WTC11 (cell line): ENCODE measurements at regions of chr20 and their contacts with region 1.

Region 1: GRCh38 chr20:38658879-38659596 is 57.4 kb downstream of the ARHGAP40 start:
- DNase-seq: peak; percentile 76
- ATAC-seq: peak; percentile 99
- H3K4me3 Mint-ChIP-seq: no peak overlapping the region
- H3K27ac Mint-ChIP-seq: no peak overlapping the region
- H3K4me1 Mint-ChIP-seq: peaks cover 17% of the 10 kb centered on the region
- H3K27me3 Mint-ChIP-seq: peaks cover 54% of the 10 kb centered on the region
- CTCF ChIP-seq: peak; percentile 80

Region 2: DNA sequence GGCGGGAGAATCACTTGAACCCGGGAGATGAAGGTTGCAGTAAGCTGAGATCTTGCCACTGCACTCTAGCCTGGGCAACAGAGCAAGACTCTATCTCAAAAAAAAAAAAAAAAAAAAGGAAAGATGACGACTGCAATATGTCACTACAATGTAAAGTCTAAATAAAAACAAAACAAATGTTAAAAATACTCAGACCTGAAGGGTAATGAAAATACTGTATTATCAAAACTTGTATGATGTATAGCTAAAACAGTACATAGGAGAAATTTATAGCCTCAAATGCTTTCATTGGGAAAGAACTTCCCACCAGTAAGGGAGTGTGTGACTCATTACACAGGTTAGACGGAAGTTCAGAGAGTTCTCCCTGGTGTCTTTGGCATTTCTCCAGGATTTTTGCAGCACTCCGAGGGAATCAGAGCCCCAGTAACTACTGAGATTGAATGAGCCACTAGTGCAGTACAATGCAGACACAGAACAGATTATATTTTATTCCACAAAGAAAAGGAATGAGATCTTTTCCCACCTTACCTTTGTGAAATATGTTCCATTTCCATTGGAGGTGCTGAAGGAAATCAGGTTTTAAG is 198.9 kb before region 1 on chr20:
- CTCF ChIA-PET with region 1: no interaction called
- POLR2A ChIA-PET with region 1: no interaction called
- DNase-seq: no peak
- ATAC-seq: no peak; the same call in 1 of the 2 replicates
- H3K4me3 Mint-ChIP-seq: no peak overlapping the region
- H3K27ac Mint-ChIP-seq: no peak overlapping the region
- H3K4me1 Mint-ChIP-seq: no peaks in the 10 kb centered on the region
- H3K27me3 Mint-ChIP-seq: peaks cover 9% of the 10 kb centered on the region
- CTCF ChIP-seq: no peak

Region 3: DNA sequence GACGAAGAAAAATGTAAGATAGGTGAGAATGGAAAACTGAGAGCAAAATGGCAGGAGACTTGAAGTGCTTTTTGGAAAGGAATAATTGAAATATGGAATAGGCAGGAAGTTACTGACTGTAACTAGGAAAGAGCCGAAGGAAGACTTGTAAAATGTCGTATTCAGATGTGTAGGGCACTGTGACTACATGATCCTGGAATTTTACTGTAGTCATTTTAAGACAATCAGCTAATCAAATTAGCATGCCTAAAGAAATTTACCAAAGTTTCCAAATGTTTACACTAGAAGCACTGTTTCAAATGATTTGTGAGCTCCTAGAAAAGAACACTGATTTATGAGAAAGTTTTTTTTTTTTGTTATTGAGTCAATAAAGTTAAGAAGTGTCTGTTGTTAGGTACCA is 99.3 kb before region 1 on chr20:
- CTCF ChIA-PET with region 1: no interaction called
- POLR2A ChIA-PET with region 1: no interaction called
- DNase-seq: no peak
- ATAC-seq: no peak
- H3K4me3 Mint-ChIP-seq: no peak overlapping the region
- H3K27ac Mint-ChIP-seq: no peak overlapping the region
- H3K4me1 Mint-ChIP-seq: no peaks in the 10 kb centered on the region
- H3K27me3 Mint-ChIP-seq: no peaks in the 10 kb centered on the region
- CTCF ChIP-seq: no peak

Region 4: DNA sequence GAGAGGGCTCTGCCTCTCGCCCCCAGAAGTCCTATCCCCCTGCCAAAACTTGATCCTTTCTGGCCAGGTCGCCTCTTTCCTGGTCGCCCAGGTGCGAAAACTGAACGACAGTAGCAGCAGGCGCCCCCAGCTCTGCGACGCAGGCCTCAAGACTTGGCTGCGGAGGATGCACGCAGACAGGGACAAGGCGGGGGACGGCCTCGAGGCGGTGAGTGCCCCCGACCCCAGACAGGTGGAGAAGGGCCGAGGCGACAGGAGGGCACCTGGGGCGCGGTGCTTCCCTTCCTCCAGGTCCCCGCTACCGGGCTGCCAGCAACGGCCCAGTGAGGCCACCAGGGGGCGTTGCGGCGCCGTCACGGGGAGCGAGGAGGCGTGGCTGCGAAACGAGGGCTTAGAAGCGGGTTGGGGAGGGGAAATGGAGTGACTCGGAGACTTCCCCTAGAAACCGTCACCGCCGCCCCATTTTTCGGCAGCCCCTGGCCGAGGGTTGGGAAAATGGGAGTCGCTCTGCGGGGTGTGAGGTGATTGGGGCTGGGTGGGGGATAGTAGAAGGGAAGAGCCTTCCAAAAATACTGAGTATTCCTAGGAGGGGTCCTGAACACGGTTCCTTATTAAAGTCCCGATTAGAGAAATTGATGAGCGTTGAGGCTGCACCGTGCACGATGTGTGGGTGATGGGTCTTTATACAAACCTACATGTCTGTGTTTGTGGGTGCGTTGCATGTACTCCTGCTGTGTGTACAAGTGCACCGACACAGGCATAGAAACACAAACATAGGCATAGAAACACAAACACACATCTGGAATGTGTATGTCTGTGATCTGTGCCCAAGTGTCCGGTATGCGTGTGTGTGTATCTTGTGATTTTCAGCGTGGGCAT is 12.8 kb before region 1 on chr20:
- CTCF ChIA-PET with region 1: interaction called, 68 read pairs
- POLR2A ChIA-PET with region 1: no interaction called
- DNase-seq: peak; percentile 91
- ATAC-seq: peak; percentile 83
- H3K4me3 Mint-ChIP-seq: peak overlapping the region; percentile 71
- H3K27ac Mint-ChIP-seq: no peak overlapping the region
- H3K4me1 Mint-ChIP-seq: peaks cover 17% of the 10 kb centered on the region
- H3K27me3 Mint-ChIP-seq: peaks cover 6% of the 10 kb centered on the region; the same call in 1 of the 2 replicates
- CTCF ChIP-seq: peak; percentile 91

Region 5: DNA sequence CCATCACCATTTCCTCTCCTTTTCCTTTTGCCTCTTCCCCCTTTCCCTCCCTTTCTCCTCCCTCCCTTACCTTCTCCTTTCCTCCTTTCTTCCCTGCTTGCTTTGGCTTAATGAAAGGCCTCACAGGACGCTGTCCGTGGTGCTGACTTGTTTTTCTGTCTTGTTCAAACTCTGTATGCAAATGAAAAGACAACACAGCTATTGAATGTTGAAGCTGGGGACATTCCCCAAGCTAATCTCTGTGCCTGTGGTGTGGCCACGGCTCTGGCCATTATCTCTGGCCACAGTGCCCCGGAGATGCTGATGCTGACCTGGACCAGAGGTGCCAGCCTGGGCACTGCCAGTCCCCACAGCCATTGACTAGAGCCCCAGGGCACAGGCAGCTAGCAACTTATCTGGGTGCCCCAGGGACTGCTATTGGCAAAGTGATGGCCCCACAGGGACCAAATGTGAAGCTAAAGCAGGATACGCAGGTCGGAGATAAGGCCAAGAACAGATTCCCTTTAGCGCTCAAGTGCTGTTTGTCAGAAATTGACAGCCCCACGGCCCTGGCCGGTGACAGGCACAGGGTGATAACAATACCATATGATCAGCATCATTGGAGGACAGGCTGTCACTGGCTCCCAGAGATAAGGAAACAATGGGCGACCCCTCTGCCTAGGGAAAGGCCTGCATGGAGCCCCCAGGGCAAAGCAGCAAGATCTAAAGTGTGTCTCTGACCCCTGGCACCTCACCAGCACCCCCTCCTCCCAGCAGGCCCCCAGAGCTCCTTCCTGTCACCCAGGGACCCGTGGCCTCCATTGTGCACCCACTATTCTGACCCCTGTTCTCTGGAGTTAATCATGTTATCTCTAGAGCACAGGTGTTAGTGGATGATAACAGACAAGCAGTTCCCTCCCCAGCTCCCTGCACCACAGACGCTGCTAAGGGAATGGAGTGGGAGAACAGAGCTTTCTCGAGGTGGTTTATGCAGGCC is 33.7 kb after region 1 on chr20:
- CTCF ChIA-PET with region 1: interaction called, 14 read pairs
- POLR2A ChIA-PET with region 1: no interaction called
- DNase-seq: peak; percentile 93
- ATAC-seq: peak; percentile 87
- H3K4me3 Mint-ChIP-seq: no peak overlapping the region
- H3K27ac Mint-ChIP-seq: no peak overlapping the region
- H3K4me1 Mint-ChIP-seq: peaks cover 3% of the 10 kb centered on the region
- H3K27me3 Mint-ChIP-seq: peaks cover 43% of the 10 kb centered on the region
- CTCF ChIP-seq: no peak

Region 6: DNA sequence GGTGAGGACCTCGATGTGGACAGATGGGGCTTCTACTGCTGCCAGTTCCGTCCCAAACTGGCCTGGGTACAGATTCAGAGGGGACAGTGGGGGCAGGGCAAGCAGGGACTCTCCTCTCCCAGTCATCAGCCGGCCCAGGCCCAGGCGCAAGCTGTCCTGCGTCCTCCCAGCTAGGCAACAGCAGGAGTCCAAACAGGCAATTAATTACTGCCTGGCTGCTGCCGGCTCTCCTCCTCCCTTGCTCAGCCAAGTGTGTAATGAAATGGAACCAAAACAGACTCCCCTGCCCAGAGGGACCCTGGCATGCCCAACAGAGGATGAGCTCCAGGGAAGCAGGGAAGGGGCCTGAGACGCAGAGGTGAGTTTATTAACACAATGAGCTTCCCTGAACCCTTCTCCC is 47.5 kb after region 1 on chr20:
- CTCF ChIA-PET with region 1: interaction called, 11 read pairs
- POLR2A ChIA-PET with region 1: no interaction called
- DNase-seq: peak; percentile 30
- ATAC-seq: peak; percentile 85
- H3K4me3 Mint-ChIP-seq: no peak overlapping the region
- H3K27ac Mint-ChIP-seq: no peak overlapping the region
- H3K4me1 Mint-ChIP-seq: peaks cover 10% of the 10 kb centered on the region
- H3K27me3 Mint-ChIP-seq: peaks cover 13% of the 10 kb centered on the region
- CTCF ChIP-seq: no peak

Region 7: GRCh38 chr20:38748097-38748860 is 89.2 kb after region 1 on chr20 and contains the start of gene ACTR5:
- CTCF ChIA-PET with region 1: interaction called, 33 read pairs
- POLR2A ChIA-PET with region 1: no interaction called
- DNase-seq: peak; percentile 97
- ATAC-seq: peak; percentile 94
- H3K4me3 Mint-ChIP-seq: peak within 1 kb of the TSS; percentile 96
- H3K27ac Mint-ChIP-seq: peak within 1 kb of the TSS; percentile 99
- H3K4me1 Mint-ChIP-seq: peaks cover 20% of the 10 kb centered on the region
- H3K27me3 Mint-ChIP-seq: peaks cover 32% of the 10 kb centered on the region
- CTCF ChIP-seq: no peak
- total RNA-seq, gene ACTR5: 9.8 to 12.0 TPM (median 11.5 TPM) in 3 replicates